ENCODE measurements at regions of chr2 and their contacts with region 1.

Region 1: DNA sequence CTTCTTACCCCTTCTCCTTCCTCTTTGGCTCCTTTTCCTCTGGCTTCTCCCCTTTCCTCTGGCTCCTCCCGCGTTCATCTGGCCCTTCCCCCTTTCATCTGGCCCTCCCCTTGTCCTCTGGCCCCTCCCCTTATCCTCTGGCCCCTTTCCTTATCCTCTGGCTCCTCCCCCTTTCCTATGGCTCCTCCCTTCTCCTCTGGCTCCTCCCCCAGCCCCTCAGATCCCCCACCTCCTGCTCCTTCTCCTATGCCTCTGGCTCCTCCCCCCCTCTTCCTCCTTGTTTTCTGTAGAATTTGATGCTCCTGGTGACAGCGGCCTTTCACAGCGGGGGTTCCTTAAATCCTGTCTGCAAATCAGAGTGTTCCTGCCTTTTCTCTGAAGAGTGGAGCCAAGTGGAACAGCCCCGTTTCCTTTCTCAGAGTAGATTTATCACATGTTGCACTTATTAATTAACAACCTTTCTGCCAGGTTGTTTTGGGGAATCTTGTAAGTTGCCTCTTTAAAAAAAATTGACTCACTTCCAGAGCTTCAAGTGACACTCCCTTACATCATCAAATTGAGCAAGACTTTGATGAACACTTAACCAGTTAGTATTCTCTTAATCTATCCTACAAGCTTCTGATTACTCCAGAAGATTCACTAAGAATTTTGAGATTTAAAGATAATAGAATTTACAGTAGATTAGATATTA is 27.9 kb downstream of the FABP1 start:
- DNase-seq: no peak
- ATAC-seq: peak; percentile 48 to 58
- H3K4me3 ChIP-seq: no peak overlapping the region
- H3K27ac ChIP-seq: no peak overlapping the region
- H3K4me1 ChIP-seq: no peaks in the 10 kb centered on the region
- H3K27me3 ChIP-seq: no peaks in the 10 kb centered on the region

Region 2: GRCh38 chr2:88144914-88145497 is 45.1 kb after region 1 on chr2:
- intact Hi-C with region 1: loop called in 1 of 4 experiments (anchors 2 kb)
- DNase-seq: no peak
- ATAC-seq: peak in 1 of 2 donors; percentile 31
- H3K4me3 ChIP-seq: no peak overlapping the region
- H3K27ac ChIP-seq: no peak overlapping the region
- H3K4me1 ChIP-seq: no peaks in the 10 kb centered on the region
- H3K27me3 ChIP-seq: no peaks in the 10 kb centered on the region

Region 3: DNA sequence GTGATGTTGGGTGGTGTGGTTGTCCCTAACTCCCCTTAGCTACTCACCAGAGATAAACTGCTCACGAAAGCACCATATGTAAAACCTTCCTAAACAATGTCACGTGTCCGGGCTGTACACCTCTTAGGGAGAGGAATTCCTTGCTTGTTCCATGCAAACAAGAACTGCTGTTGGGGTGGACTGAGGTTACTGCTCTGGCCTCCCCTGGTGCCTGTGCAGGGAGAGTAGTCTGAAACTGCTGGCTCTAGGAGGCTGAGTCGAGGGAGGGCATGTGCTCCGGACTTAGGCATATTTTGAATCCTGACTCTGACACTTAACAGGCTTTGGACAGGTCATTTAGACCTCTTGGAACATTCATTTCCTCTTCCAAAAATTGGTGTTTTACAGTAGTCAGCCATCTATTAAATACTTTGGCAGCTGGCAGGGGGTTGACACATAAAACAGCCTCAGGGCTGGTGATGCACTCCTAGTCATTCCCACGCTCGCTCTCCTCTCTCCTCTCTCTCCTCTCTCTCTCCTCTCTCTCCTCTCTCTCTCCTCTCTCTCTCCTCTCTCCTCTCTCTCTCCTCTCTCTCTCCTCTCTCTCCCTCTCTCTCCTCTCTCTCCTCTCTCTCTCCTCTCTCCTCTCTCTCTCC is 80.8 kb after region 1 on chr2:
- intact Hi-C with region 1: no loop called
- DNase-seq: no peak
- ATAC-seq: no peak
- H3K4me3 ChIP-seq: no peak overlapping the region
- H3K27ac ChIP-seq: no peak overlapping the region
- H3K4me1 ChIP-seq: no peaks in the 10 kb centered on the region
- H3K27me3 ChIP-seq: no peaks in the 10 kb centered on the region

Region 4: DNA sequence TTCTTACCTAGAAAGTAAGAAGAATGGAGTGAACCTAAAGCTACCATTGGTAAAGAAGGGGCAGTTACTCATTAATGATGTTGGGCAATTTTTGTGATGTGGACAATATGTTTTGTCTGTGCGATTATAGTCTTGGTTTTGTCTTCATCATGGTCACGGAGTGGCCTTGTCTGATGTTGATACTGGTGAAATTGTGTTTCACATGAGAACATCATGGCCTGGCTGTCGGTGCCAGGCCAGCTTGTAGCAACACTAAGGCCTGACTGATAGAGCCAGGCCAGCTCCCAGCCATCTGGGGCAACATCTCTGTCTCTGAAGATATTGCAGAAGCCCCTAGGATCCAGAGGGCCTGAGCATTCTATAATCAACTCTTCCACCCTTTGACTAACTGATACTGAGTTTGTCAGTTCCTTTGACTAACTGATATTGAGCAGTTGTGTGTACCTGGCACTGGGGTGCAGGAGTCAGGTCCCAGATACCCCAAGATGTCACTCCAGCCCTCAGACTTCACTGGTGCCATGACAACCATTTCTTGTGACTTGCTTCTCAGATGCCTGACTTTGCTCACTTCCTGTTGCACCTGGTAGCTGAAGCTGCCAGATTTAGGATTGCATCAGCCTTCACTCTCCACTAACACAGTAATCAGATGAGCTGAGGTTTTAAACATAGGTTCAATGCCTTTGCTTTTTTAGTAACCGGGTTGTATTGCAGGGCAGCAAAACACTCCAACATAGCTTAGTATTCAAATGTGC is 654.1 kb after region 1 on chr2:
- intact Hi-C with region 1: no loop called
- DNase-seq: no peak
- ATAC-seq: no peak
- H3K4me3 ChIP-seq: no peak overlapping the region
- H3K27ac ChIP-seq: no peak overlapping the region
- H3K4me1 ChIP-seq: no peaks in the 10 kb centered on the region
- H3K27me3 ChIP-seq: no peaks in the 10 kb centered on the region

Measured in right cardiac atrium (tissue), 5 donors.